ENCODE measurements at regions of chr1 and their contacts with region 1.

Region 1: DNA sequence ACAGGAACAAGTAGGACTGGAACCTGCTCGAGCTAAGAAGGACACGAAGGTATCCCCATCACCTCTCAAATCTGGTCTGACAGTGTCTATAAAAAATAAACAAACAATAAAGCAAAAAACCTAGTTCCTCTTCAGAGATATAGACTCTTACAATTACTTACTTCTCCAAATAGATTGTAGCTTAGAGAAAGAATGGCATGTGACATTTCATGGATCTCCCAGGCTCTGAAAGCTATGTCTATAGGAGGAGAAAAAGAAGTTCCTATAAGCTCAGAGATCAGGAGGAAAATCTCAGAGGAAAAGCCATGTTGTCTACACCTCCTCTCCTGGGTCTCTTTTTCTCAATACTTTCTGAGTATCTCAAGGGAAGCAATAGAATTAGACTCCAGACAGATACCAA is 12.3 kb upstream of the OR10J5 start:
- DNase-seq: no peak
- H3K4me3 ChIP-seq: no peak overlapping the region
- H3K4me3 Mint-ChIP-seq: no peak overlapping the region
- H3K27ac Mint-ChIP-seq: no peak overlapping the region
- H3K4me1 ChIP-seq: no peaks in the 10 kb centered on the region
- H3K4me1 Mint-ChIP-seq: no peaks in the 10 kb centered on the region
- H3K27me3 ChIP-seq: no peaks in the 10 kb centered on the region
- H3K27me3 Mint-ChIP-seq: peaks cover 7% of the 10 kb centered on the region
- CTCF ChIP-seq: no peak

Region 2: GRCh38 chr1:159483501-159483900 is 64.6 kb before region 1 on chr1:
- CTCF ChIA-PET with region 1: no interaction called
- POLR2A ChIA-PET with region 1: no interaction called
- intact Hi-C with region 1: no loop called
- DNase-seq: no peak
- H3K4me3 ChIP-seq: no peak overlapping the region
- H3K4me3 Mint-ChIP-seq: no peak overlapping the region
- H3K27ac Mint-ChIP-seq: no peak overlapping the region
- H3K4me1 ChIP-seq: no peaks in the 10 kb centered on the region
- H3K4me1 Mint-ChIP-seq: no peaks in the 10 kb centered on the region
- H3K27me3 ChIP-seq: no peaks in the 10 kb centered on the region
- H3K27me3 Mint-ChIP-seq: peaks cover 8% of the 10 kb centered on the region
- CTCF ChIP-seq: no peak

Region 3: DNA sequence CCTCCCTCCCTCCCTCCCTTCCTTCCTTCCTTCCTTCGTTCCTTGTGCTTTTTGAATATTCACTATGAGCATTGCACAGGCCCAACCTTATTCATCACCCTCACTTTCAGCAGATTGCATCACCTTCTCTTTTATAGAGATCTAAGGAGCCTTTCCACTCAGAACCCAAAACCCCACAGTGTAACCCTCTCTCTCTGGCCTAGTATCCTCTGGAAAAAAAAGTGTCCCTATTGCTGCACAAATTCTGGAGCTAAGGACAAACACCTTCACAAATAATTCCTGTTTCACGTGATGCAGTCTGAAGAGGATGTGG is 37.9 kb before region 1 on chr1:
- CTCF ChIA-PET with region 1: no interaction called
- POLR2A ChIA-PET with region 1: no interaction called
- intact Hi-C with region 1: no loop called
- DNase-seq: no peak
- H3K4me3 ChIP-seq: no peak overlapping the region
- H3K4me3 Mint-ChIP-seq: no peak overlapping the region
- H3K27ac Mint-ChIP-seq: no peak overlapping the region
- H3K4me1 ChIP-seq: no peaks in the 10 kb centered on the region; the same call in 1 of the 2 replicates
- H3K4me1 Mint-ChIP-seq: no peaks in the 10 kb centered on the region
- H3K27me3 ChIP-seq: no peaks in the 10 kb centered on the region
- H3K27me3 Mint-ChIP-seq: peaks cover 6% of the 10 kb centered on the region
- CTCF ChIP-seq: no peak

Region 4: GRCh38 chr1:159532922-159533321 is 15.2 kb before region 1 on chr1:
- CTCF ChIA-PET with region 1: no interaction called
- POLR2A ChIA-PET with region 1: no interaction called
- intact Hi-C with region 1: loop called (anchors 1 kb)
- DNase-seq: no peak
- H3K4me3 ChIP-seq: no peak overlapping the region
- H3K4me3 Mint-ChIP-seq: no peak overlapping the region
- H3K27ac Mint-ChIP-seq: no peak overlapping the region
- H3K4me1 ChIP-seq: no peaks in the 10 kb centered on the region
- H3K4me1 Mint-ChIP-seq: no peaks in the 10 kb centered on the region
- H3K27me3 ChIP-seq: no peaks in the 10 kb centered on the region
- H3K27me3 Mint-ChIP-seq: peaks cover 3% of the 10 kb centered on the region
- CTCF ChIP-seq: no peak

Region 5: GRCh38 chr1:159705251-159705903 is 157.3 kb after region 1 on chr1:
- CTCF ChIA-PET with region 1: no interaction called
- POLR2A ChIA-PET with region 1: no interaction called
- intact Hi-C with region 1: no loop called
- DNase-seq: no peak
- H3K4me3 ChIP-seq: no peak overlapping the region
- H3K4me3 Mint-ChIP-seq: no peak overlapping the region
- H3K27ac Mint-ChIP-seq: no peak overlapping the region
- H3K4me1 ChIP-seq: peaks cover 17% of the 10 kb centered on the region
- H3K4me1 Mint-ChIP-seq: peaks cover 7% of the 10 kb centered on the region
- H3K27me3 ChIP-seq: no peaks in the 10 kb centered on the region
- H3K27me3 Mint-ChIP-seq: peaks cover 2% of the 10 kb centered on the region
- CTCF ChIP-seq: no peak

Measured in Caco-2 (cell line).